ENCODE measurements at regions of chr16 and their contacts with region 1.

Region 1: DNA sequence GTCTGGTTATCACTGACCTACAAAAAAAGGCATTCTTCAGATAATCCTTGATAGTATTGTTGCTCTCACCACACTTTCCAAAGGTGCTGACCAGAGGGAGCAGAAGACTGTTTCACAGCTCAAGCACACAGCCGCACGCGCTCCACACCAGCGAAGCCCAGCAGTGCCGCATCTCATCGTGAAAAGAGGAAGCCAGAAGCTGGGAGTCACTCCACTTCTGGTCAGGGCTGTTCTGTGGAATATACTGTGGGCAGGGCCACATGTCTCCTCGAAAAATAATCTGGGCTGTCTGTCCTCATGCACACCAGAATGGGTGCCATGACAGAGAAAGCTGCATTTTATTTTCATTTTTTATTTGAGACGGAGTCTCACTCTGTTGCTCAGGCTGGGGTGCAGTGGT is 7.3 kb upstream of the PRSS36 start:
- DNase-seq: no peak

Region 2: DNA sequence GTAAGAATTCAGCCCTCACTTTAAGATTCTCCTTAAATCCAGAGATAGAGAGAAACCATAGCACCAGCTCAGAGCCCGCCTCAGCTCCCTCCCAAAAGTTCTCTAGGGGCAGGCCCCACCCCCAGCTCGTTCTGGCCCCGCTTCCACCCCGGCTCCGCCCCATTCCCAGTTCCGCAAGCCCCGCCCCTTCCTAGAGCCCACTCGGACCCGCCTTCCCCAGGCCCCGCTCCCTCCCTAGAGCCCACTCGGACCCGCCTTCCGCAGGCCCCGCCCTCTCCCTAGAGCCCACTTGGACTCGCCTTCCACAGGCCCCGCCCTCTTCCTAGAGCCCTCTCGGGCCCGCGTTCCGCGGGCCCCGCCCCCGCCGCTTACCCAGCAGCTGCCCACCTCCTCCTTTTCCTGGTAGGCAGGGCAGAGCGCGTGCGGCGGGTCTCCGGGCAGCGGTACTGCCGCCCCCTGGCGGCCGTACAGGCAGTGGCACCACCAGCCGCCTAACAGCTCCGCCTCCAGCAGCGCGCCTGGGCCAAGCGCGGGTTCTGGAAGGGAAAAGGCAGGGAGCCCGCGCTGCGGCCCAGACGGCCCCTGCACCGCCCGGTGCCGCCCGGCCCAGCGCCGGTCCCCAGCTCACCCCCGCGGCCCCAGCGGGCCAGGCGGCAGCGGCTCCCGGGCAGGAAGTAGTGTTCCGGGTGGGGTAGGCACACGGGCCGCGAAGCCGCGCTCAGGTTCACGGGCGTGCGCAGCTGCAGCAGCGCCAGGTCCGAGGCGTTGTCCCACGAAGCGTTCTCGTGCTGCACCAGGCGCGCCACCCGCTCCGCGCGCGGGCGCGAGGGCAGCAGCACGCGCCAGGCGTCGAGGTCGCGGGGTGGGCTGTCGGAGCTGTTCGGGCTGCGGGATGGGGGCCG is 14.8 kb before region 1 on chr16:
- CTCF ChIA-PET with region 1: interaction called, 10 read pairs
- POLR2A ChIA-PET with region 1: interaction called, 10 read pairs
- DNase-seq: peak; percentile 100